Head of caudate nucleus (tissue), 42 donors: ENCODE measurements at regions of chr18 and their contacts with region 1.

Region 1: DNA sequence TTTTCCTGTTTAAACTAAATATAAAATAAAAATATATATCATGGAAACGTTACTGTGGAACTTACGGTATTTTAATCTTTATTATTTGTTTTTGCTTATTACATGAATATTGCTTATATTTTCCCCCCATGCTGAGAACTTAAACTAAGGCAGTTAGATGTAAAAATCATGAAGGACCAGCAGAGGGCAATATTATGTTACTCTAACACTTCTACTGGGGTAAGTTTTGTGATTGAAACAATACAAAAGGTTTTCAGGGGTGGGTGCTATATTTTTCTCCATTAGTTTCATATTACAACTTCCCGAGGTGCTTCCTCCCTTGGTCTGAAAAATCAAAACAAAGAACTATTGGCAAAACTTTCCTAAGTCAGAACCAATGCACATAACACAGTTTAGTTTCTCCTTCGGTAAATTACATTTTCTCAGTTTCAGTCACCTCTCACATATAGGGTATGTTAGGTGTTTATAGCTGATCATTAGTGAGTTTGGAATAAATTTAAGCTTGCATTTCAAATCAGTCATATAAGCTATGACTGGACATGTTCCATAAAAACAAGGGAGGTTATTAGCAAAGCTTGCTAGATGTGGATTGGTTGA is 54.8 kb downstream of the ZNF407 start:
- DNase-seq: peak in 2 of 42 donors; percentile 11 to 35

Region 2: GRCh38 chr18:74563999-74564398 is 88.5 kb before region 1 on chr18:
- intact Hi-C with region 1: no loop called
- DNase-seq: no peak

Region 3: GRCh38 chr18:75478996-75479880 is 826.7 kb after region 1 on chr18:
- intact Hi-C with region 1: loop called (anchors 10 kb)
- DNase-seq: peak in 41 of 42 donors; percentile 23 to 88 (median 61)